ENCODE measurements at regions of chr16 and their contacts with region 1.

Region 1: DNA sequence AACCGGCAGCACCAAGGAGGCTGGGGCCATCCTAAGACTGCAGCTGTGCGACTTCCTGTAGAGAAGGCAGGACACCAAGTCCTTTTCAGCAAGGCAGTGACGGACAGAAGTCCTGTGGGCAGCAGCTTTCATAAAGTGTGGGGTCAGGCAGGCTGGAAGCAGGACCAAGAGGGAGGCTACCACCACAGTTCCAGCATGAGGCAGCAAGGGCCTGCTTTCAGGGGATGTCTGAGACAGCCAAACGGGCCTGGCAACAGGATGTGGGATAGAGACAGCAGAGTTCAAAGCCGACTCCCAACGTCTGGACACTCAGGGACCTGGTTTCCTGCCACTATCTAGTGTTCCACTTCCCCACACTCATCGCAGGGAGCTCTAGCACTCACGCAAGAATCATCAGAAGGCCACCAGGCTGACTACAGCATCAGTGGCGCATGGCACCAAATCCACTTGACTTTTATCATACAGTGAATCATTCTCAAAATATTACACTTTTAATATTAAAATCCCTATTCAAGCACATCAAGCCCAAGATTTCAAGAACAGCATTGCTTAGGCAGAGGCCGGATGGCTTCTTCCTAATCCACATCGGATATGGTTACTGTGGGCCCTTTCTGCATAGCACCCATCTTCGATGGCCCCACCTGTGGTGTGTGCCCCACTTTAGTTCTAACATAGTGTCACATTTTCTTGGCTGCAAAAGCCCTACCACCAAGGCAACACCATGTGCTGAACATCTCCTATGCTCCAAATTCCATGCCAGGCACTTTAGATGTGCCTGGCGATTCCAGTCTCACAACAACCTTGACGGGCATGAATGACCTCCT is 5.2 kb downstream of the USP7 start:
- DNase-seq: peak; percentile 35 to 46 (median 36)
- H3K4me3 ChIP-seq: peak overlapping the region in 1 of 3 experiments; percentile 94
- H3K4me3 Mint-ChIP-seq: peak overlapping the region; percentile 43 to 60
- H3K27ac ChIP-seq: peak overlapping the region; percentile 57 to 67
- H3K27ac Mint-ChIP-seq: peak overlapping the region; percentile 53 to 84 (median 79)
- H3K4me1 ChIP-seq: peaks cover 71 to 78% of the 10 kb centered on the region in 2 donors
- H3K4me1 Mint-ChIP-seq: peaks cover 73% of the 10 kb centered on the region
- H3K27me3 ChIP-seq: no peaks in the 10 kb centered on the region
- H3K27me3 Mint-ChIP-seq: peaks cover 0 to 2% (median 0%) of the 10 kb centered on the region in 3 donors
- CTCF ChIP-seq: no peak

Region 2: DNA sequence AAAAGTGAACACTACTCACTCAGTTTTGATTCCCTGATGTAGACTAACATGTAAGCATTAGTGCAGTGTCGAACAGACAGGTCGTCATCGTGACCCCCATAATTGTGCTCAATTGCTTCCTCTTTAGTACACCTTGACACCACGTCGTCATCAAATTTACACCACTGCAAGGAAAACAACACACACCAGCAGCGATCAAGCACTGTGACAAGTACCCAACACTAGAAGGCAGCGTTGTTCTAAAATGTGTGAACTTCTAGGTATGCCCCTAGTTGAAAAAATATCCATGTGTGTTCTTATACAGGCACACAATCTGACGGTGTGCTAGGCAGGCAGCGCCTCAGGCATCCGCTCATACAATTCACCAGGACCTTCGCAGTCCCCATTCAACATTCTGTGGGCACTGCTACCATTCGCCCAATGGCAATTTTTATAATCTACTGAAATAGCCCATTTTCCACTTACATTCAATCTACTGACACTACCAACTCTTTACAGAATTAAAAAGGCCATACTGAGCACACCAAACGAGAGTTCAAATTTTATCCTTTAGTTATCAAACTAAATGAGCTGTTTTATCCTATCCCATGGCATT is 53.3 kb before region 1 on chr16:
- intact Hi-C with region 1: loop called in 1 of 2 experiments (anchors 10 kb)
- DNase-seq: no peak
- H3K4me3 ChIP-seq: no peak overlapping the region
- H3K4me3 Mint-ChIP-seq: no peak overlapping the region
- H3K27ac ChIP-seq: no peak overlapping the region
- H3K27ac Mint-ChIP-seq: peak overlapping the region in 1 of 7 donors; percentile 21
- H3K4me1 ChIP-seq: peaks cover 22 to 25% of the 10 kb centered on the region in 2 donors
- H3K4me1 Mint-ChIP-seq: peaks cover 23% of the 10 kb centered on the region
- H3K27me3 ChIP-seq: no peaks in the 10 kb centered on the region
- H3K27me3 Mint-ChIP-seq: no peaks in the 10 kb centered on the region
- CTCF ChIP-seq: peak; percentile 28